Natural killer cell (primary cell): ENCODE measurements at regions of chr3 and their contacts with region 1.

Region 1: GRCh38 chr3:15557511-15557946 is 36.0 kb upstream of the COLQ start:
- DNase-seq: peak; percentile 27 to 81
- ATAC-seq: peak; percentile 86 to 91 (median 88)
- H3K4me3 ChIP-seq: no peak overlapping the region
- H3K4me3 Mint-ChIP-seq: no peak overlapping the region
- H3K27ac ChIP-seq: no peak overlapping the region
- H3K27ac Mint-ChIP-seq: peak overlapping the region; percentile 85 to 91
- H3K4me1 ChIP-seq: peaks cover 14% of the 10 kb centered on the region
- H3K4me1 Mint-ChIP-seq: peaks cover 17 to 18% of the 10 kb centered on the region in 2 donors
- H3K27me3 ChIP-seq: no peaks in the 10 kb centered on the region
- H3K27me3 Mint-ChIP-seq: no peaks in the 10 kb centered on the region
- CTCF ChIP-seq: peak; percentile 82

Region 2: GRCh38 chr3:15332405-15333098 is 225.0 kb before region 1 on chr3 and contains the start of gene SH3BP5:
- intact Hi-C with region 1: loop called (anchors 1 kb)
- DNase-seq: peak; percentile 75 to 87
- ATAC-seq: peak; percentile 90 to 96 (median 94)
- H3K4me3 ChIP-seq: peak within 1 kb of the TSS; percentile 97
- H3K4me3 Mint-ChIP-seq: peak within 1 kb of the TSS; percentile 97
- H3K27ac ChIP-seq: peak within 1 kb of the TSS; percentile 58
- H3K27ac Mint-ChIP-seq: peak within 1 kb of the TSS; percentile 88 to 95
- H3K4me1 ChIP-seq: peaks cover 27% of the 10 kb centered on the region
- H3K4me1 Mint-ChIP-seq: peaks cover 42 to 55% of the 10 kb centered on the region in 2 donors
- H3K27me3 ChIP-seq: no peaks in the 10 kb centered on the region
- H3K27me3 Mint-ChIP-seq: no peaks in the 10 kb centered on the region
- CTCF ChIP-seq: peak; percentile 61
- total RNA-seq, gene SH3BP5: 89.4 to 129 (median 91.0) TPM

Region 3: GRCh38 chr3:15427182-15427880 is 130.2 kb before region 1 on chr3 and contains the starts of genes EAF1 and METTL6:
- intact Hi-C with region 1: loop called (anchors 1 kb)
- DNase-seq: peak; percentile 78 to 90
- ATAC-seq: peak; percentile 76 to 89 (median 84)
- H3K4me3 ChIP-seq: peak within 1 kb of the TSS; percentile 97
- H3K4me3 Mint-ChIP-seq: peak within 1 kb of the TSS; percentile 98
- H3K27ac ChIP-seq: peak within 1 kb of the TSS; percentile 80
- H3K27ac Mint-ChIP-seq: peak within 1 kb of the TSS; percentile 96 to 97
- H3K4me1 ChIP-seq: peaks cover 23% of the 10 kb centered on the region
- H3K4me1 Mint-ChIP-seq: peaks cover 56 to 61% of the 10 kb centered on the region in 2 donors
- H3K27me3 ChIP-seq: no peaks in the 10 kb centered on the region
- H3K27me3 Mint-ChIP-seq: no peaks in the 10 kb centered on the region
- CTCF ChIP-seq: peak; percentile 29
- total RNA-seq, gene EAF1: 39.7 to 45.8 (median 41.5) TPM
- total RNA-seq, gene METTL6: 9.8 to 13.3 (median 11.8) TPM

Region 4: GRCh38 chr3:15440891-15441290 is 116.6 kb before region 1 on chr3:
- intact Hi-C with region 1: loop called (anchors 5 kb)
- DNase-seq: no peak
- ATAC-seq: peak; percentile 49 to 69 (median 61)
- H3K4me3 ChIP-seq: no peak overlapping the region
- H3K4me3 Mint-ChIP-seq: peak overlapping the region; percentile 7
- H3K27ac ChIP-seq: peak overlapping the region; percentile 19
- H3K27ac Mint-ChIP-seq: peak overlapping the region; percentile 76 to 82
- H3K4me1 ChIP-seq: peaks cover 20% of the 10 kb centered on the region
- H3K4me1 Mint-ChIP-seq: peaks cover 38 to 39% of the 10 kb centered on the region in 2 donors
- H3K27me3 ChIP-seq: no peaks in the 10 kb centered on the region
- H3K27me3 Mint-ChIP-seq: no peaks in the 10 kb centered on the region
- CTCF ChIP-seq: no peak

Region 5: DNA sequence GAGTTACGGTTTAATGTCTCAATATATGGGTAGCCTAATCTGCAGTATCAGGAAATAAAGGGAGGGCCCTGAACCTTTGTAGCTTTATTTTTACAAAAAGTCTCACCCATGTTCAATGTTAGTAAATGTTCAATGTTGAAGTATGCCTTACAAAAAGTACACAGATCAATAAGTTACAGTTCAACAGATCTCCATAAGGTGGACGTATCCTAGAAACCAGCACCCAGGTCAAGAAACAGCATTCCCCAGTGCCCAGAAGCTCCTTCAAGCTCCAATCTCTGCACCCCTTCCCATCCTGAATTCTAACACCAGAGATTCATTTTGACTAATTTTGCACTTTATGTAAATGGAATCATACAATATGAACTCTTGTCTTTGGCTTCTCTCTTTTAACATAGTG is 67.4 kb before region 1 on chr3:
- intact Hi-C with region 1: no loop called
- DNase-seq: no peak
- ATAC-seq: no peak
- H3K4me3 ChIP-seq: no peak overlapping the region
- H3K4me3 Mint-ChIP-seq: no peak overlapping the region
- H3K27ac ChIP-seq: no peak overlapping the region
- H3K27ac Mint-ChIP-seq: peak overlapping the region; percentile 37 to 59
- H3K4me1 ChIP-seq: peaks cover 24% of the 10 kb centered on the region
- H3K4me1 Mint-ChIP-seq: peaks cover 55 to 71% of the 10 kb centered on the region in 2 donors
- H3K27me3 ChIP-seq: no peaks in the 10 kb centered on the region
- H3K27me3 Mint-ChIP-seq: no peaks in the 10 kb centered on the region
- CTCF ChIP-seq: no peak

Region 6: DNA sequence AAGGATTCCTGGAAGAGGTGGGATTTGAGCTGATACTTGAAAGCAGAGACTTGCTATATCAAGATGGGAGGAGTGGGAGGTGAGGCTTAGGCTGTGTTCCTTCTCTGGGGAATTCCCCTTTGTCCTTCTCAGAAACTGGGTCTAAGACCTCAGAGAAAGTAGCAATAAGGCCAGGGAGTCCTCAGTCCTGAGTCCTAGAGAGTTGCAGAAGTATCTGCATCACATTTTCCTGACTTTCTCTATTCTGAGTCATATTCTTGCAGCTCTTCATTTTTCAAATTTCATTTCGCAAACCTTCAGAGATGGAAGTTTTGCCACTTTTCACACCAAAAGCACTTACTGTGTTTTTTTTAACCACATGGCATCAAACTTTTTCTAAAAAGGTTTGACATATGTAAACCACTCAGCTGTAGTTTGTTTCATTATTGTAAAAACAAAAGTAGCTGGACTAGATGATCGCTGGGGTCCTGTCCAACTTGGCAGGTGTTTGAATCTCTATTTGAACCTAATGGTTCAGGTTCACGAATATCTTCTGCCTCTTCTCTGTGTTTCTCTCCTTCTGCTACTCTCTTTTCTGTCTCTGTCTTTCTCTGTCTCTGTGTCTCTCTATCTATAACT is 57.3 kb before region 1 on chr3:
- intact Hi-C with region 1: loop called (anchors 10 kb)
- DNase-seq: peak in 1 of 2 donors; percentile 29
- ATAC-seq: peak; percentile 56 to 78 (median 73)
- H3K4me3 ChIP-seq: no peak overlapping the region
- H3K4me3 Mint-ChIP-seq: peak overlapping the region; percentile 75
- H3K27ac ChIP-seq: peak overlapping the region; percentile 57
- H3K27ac Mint-ChIP-seq: peak overlapping the region; percentile 84 to 87
- H3K4me1 ChIP-seq: peaks cover 52% of the 10 kb centered on the region
- H3K4me1 Mint-ChIP-seq: peaks cover 68 to 76% of the 10 kb centered on the region in 2 donors
- H3K27me3 ChIP-seq: no peaks in the 10 kb centered on the region
- H3K27me3 Mint-ChIP-seq: no peaks in the 10 kb centered on the region
- CTCF ChIP-seq: no peak

Region 7: DNA sequence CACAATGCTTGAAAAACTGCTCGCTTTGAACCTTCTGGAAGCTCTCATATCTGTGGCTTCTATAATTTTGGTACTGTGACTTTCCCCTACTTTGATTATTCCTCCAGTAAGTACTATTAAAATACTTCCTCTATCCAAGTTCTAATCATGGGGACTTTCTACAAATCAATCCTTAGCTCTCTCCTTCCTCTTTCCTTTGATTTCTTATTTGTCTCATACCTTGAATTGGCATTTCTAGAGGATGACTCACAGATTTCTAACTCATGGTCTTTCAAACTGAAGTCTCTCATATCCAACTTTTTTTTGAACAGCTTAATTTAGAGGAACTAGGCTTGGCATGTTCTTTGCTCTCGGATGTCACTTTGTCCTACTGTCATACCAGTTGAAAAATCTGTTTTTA is 1943.1 kb after region 1 on chr3:
- intact Hi-C with region 1: no loop called
- DNase-seq: no peak
- ATAC-seq: no peak
- H3K4me3 ChIP-seq: no peak overlapping the region
- H3K4me3 Mint-ChIP-seq: no peak overlapping the region
- H3K27ac ChIP-seq: no peak overlapping the region
- H3K27ac Mint-ChIP-seq: no peak overlapping the region
- H3K4me1 ChIP-seq: no peaks in the 10 kb centered on the region
- H3K4me1 Mint-ChIP-seq: peaks cover 5 to 10% of the 10 kb centered on the region in 2 donors
- H3K27me3 ChIP-seq: no peaks in the 10 kb centered on the region
- H3K27me3 Mint-ChIP-seq: no peaks in the 10 kb centered on the region
- CTCF ChIP-seq: no peak